ENCODE measurements at regions of chr1 and their contacts with region 1.

Region 1: GRCh38 chr1:9494929-9495758 is 44.1 kb upstream of the SLC25A33 start:
- DNase-seq: peak in 5 of 10 donors; percentile 11 to 66 (median 41)
- H3K4me3 ChIP-seq: peak overlapping the region in 58 of 59 donors; percentile 11 to 64 (median 48)
- H3K27ac ChIP-seq: peak overlapping the region in 1 of 59 donors; percentile 2
- H3K27me3 ChIP-seq: peaks cover 0 to 10% (median 0%) of the 10 kb centered on the region in 45 donors
- CTCF ChIP-seq: peak; percentile 90 to 100 (median 98)

Region 2: GRCh38 chr1:9110669-9111356 is 384.3 kb before region 1 on chr1:
- intact Hi-C with region 1: loop called (anchors 2 to 5 kb)
- DNase-seq: peak; percentile 65 to 94 (median 89)
- H3K4me3 ChIP-seq: no peak overlapping the region
- H3K27ac ChIP-seq: no peak overlapping the region
- H3K27me3 ChIP-seq: peaks cover 0 to 3% (median 0%) of the 10 kb centered on the region in 45 donors
- CTCF ChIP-seq: peak; percentile 80 to 97 (median 92)

Region 3: GRCh38 chr1:9269078-9269501 is 226.1 kb before region 1 on chr1:
- intact Hi-C with region 1: loop called in 1 of 2 experiments (anchors 2 kb)
- DNase-seq: peak in 1 of 10 donors; percentile 28
- H3K4me3 ChIP-seq: no peak overlapping the region
- H3K27ac ChIP-seq: no peak overlapping the region
- H3K27me3 ChIP-seq: no peaks in the 10 kb centered on the region
- CTCF ChIP-seq: no peak

Region 4: GRCh38 chr1:9292361-9293240 is 202.5 kb before region 1 on chr1 and contains the start of gene SPSB1:
- intact Hi-C with region 1: loop called (anchors 2 kb)
- DNase-seq: peak; percentile 19 to 81 (median 64)
- H3K4me3 ChIP-seq: peak within 1 kb of the TSS; percentile 63 to 95 (median 86)
- H3K27ac ChIP-seq: peak within 1 kb of the TSS; percentile 54 to 95 (median 88)
- H3K27me3 ChIP-seq: no peaks in the 10 kb centered on the region
- CTCF ChIP-seq: peak in 8 of 56 donors; percentile 6 to 48 (median 22)
- total RNA-seq, gene SPSB1: 4.7 to 43.4 (median 12.2) TPM

Region 5: GRCh38 chr1:9455487-9456234 is 39.5 kb before region 1 on chr1:
- intact Hi-C with region 1: loop called in 1 of 2 experiments (anchors 5 kb)
- DNase-seq: peak; percentile 17 to 79 (median 66)
- H3K4me3 ChIP-seq: no peak overlapping the region
- H3K27ac ChIP-seq: peak overlapping the region in 1 of 59 donors; percentile 24
- H3K27me3 ChIP-seq: no peaks in the 10 kb centered on the region
- CTCF ChIP-seq: peak; percentile 35 to 97 (median 85)

Region 6: DNA sequence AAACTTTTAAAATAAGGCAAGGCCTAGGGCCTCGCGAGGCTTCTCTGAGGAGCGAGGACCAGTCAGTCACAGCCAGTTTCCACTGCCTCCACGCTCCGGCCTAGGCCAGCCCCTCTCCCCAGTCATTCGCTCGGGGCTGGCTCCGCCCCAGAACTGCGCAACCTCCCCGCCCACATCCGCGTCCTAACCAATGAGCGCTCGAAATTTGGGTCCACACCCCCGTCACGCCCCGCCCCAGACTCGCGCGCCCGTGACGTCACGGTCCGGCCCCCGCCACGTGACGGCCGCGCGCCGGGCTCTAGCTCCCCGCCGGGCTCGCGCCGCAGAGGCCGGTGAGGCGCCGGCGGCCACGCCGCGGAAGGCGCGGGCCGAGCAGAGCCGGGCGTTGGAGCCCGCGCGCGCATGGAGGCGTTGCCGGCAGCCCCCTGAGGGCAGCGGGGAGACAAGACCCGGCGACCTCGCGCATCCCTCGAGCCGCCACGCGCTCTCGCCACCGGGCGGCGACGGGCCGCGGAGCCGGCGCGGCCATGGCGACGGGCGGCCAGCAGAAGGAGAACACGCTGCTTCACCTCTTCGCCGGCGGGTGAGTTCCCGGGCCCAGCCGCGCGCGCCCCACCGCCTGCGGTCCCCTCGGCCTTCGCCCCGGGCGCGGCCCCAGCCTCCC is 44.2 kb after region 1 on chr1 and contains the start of gene SLC25A33:
- intact Hi-C with region 1: loop called in 1 of 2 experiments (anchors 5 kb)
- DNase-seq: peak; percentile 75 to 99 (median 98)
- H3K4me3 ChIP-seq: peak within 1 kb of the TSS; percentile 62 to 96 (median 86)
- H3K27ac ChIP-seq: peak within 1 kb of the TSS; percentile 59 to 99 (median 93)
- H3K27me3 ChIP-seq: no peaks in the 10 kb centered on the region
- CTCF ChIP-seq: peak in 5 of 56 donors; percentile 2 to 15 (median 12)
- total RNA-seq, gene SLC25A33: 5.8 to 21.0 (median 10.0) TPM

Region 7: GRCh38 chr1:9573723-9574122 is 78.6 kb after region 1 on chr1:
- intact Hi-C with region 1: loop called (anchors 1 to 5 kb)
- DNase-seq: no peak
- H3K4me3 ChIP-seq: no peak overlapping the region
- H3K27ac ChIP-seq: peak overlapping the region in 8 of 59 donors; percentile 4 to 48 (median 20)
- H3K27me3 ChIP-seq: no peaks in the 10 kb centered on the region
- CTCF ChIP-seq: peak in 54 of 56 donors; percentile 26 to 72 (median 50)

Measured in dorsolateral prefrontal cortex (tissue), 120 donors.